Lower leg skin (tissue), 4 donors: ENCODE measurements at regions of chr7 and their contacts with region 1.

Region 1: DNA sequence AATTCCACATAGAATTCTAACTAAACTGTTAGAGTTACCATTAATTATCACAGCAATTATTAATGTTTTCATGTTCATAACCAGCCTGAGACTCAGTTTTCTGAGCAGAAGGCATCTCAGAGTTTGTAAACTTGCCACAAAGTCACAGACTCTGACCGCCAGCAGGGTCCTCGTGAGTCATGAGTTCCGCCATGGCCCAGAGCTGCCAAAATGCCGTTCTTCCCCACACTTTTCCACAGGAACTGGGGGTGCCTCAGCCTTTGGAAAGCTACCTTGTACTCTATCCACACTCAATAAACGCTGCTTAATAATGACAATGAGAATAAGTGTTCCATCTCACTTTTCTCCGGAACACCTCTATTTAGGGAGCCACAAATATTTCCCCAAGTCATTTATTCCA is 22.1 kb upstream of the INHBA start:
- DNase-seq: no peak
- H3K4me3 ChIP-seq: no peak overlapping the region
- CTCF ChIP-seq: no peak
- POLR2A ChIP-seq: no peak

Region 2: GRCh38 chr7:40329601-40330153 is 1395.3 kb before region 1 on chr7:
- intact Hi-C with region 1: loop called (anchors 10 kb)
- DNase-seq: no peak
- H3K4me3 ChIP-seq: no peak overlapping the region
- CTCF ChIP-seq: no peak
- POLR2A ChIP-seq: no peak

Region 3: DNA sequence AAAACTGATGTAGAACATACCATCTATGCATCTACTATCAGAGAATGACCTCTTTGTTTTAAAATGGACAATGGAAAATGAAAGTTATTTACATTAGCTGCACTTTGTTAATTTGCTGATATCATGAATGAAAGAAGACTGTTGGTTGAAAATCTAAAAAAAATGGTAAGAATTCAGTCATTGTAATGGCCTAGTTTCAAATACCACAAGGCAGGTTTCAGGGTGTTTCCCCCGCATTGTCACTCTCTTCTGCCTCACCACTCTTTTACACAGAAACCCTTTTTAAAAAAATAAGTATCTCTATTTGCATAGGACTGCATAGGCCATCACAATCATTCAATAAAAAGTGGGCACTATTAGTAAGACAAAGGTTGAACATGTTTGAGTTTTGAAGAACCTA is 759.3 kb before region 1 on chr7:
- intact Hi-C with region 1: no loop called
- DNase-seq: no peak
- H3K4me3 ChIP-seq: no peak overlapping the region
- CTCF ChIP-seq: no peak
- POLR2A ChIP-seq: no peak

Region 4: GRCh38 chr7:41779918-41780317 is 54.9 kb after region 1 on chr7:
- intact Hi-C with region 1: no loop called
- DNase-seq: no peak
- H3K4me3 ChIP-seq: no peak overlapping the region
- CTCF ChIP-seq: no peak
- POLR2A ChIP-seq: no peak

Region 5: DNA sequence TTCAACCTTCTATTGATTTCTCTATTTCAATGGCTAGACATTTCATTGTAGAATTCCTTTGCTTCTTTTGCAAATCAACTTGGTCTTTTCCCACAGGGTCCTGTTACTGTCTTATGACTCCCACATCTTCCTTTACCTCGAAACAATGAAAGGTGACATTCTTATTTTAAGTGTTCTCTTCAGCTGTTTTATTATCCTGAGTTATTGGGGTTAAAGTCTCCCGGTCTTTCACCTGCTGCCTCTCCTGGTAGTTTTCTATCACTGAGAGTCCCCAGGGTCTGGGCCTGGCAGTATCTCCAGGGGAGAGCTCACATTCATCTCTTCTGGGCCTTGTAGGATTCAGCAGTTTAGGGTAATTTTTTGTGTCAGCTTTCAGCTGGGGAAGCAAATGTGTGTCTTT is 1483.2 kb after region 1 on chr7:
- intact Hi-C with region 1: loop called (anchors 5 kb)
- DNase-seq: no peak
- H3K4me3 ChIP-seq: no peak overlapping the region
- CTCF ChIP-seq: no peak
- POLR2A ChIP-seq: no peak